Mucosa of descending colon (tissue), 3 donors: ENCODE measurements at regions of chr5 and their contacts with region 1.

Region 1: DNA sequence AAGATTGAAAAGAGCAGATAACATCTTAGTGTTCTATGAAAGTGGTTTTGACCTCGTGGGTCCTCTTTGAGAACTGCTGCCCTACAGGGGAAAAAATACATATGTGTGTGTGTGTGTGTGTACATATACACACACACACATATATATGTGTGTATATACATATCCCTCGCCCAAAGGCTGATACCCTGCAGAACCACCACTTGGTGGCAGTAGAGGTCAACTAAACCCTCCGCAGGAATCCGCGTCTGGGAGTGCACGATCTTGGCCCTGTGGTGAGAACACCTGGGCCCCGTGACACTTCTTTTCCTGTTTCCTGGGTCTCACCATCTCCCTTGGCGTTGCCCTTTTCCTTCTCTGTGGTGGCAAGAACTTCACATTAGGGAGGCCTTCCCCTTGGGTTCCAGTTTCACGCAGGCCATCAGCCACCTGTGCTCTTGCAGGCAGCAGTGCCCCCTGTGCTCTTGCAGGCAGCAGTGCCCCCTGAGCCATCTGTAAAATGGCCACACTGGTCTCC is 8.2 kb downstream of the IL9 start:
- DNase-seq: peak in 2 of 3 donors; percentile 67 to 76
- ATAC-seq: peak; percentile 98
- H3K4me3 ChIP-seq: no peak overlapping the region
- H3K4me1 ChIP-seq: no peaks in the 10 kb centered on the region
- CTCF ChIP-seq: peak; percentile 69

Region 2: DNA sequence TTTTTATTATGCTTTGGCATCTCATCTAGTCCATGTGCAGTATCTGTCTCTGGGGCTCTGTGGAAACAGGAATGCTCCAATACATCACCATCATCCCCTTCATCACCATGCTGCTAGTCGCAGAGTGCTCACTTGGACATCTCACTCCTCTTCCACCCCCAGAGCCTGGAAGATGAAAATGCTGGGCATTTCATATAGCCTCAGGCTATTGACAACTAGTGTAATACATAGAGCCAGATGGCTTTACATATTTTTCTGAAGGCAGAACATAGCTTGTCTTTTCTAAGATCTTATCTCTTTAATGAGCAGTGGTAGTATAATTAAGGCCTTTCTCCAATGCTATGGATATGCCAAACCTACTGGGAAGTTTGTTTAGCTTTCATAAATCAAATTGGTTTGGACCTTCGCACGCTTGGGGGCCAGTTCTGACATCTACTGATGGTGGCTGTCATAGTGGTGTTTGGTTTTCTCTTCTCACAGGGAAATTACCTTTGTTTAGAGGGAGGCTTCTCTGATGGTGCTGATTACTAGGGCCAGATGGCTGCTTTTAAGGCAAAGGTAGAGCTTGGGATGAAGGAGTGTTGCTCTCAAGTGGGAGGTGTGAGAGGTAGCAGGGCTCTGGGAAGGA is 245.6 kb before region 1 on chr5:
- intact Hi-C with region 1: no loop called
- DNase-seq: no peak
- ATAC-seq: no peak
- H3K4me3 ChIP-seq: no peak overlapping the region
- H3K4me1 ChIP-seq: no peaks in the 10 kb centered on the region
- CTCF ChIP-seq: no peak

Region 3: DNA sequence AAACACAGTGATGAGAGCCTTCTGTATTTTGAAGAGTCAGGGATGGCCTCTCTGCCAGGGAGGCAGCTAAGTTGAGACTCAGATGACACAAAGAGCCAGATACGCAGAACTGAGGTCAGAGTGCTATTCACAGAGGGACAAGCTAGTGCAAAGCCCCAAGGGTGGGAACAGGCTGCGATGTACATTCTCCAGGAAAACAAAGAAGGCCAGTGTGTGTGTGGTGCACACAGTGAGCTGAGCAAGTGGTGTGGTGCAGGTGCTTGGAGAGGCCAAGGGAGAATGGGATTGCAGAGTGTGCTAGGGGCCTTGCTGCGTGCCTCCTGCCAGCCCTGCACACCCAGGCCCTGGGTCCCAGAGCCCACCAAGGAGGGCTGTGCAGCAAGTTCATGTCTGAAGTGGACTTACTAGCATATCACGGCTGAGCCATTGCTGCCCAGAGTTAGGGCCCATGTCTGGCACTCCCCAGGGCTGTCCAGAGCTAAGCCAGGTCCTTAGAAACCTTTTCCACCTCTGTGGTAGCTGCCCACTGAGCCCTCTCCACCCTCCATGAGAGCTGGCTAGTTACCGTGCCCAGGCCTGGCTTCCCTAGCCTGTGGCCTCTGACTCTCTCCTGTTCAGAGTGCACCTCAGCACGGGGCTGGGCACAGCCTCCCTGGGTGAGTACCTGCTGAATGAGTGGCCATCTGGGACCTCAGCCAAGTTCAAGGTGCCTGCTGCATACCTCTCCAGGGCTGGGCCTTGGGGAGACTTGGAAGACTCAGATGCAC is 43.7 kb before region 1 on chr5:
- intact Hi-C with region 1: no loop called
- DNase-seq: peak; percentile 78 to 80 (median 79)
- ATAC-seq: peak; percentile 96
- H3K4me3 ChIP-seq: no peak overlapping the region
- H3K4me1 ChIP-seq: peaks cover 2% of the 10 kb centered on the region
- CTCF ChIP-seq: no peak

Region 4: GRCh38 chr5:136037001-136037705 is 149.7 kb after region 1 on chr5:
- intact Hi-C with region 1: no loop called
- DNase-seq: peak in 2 of 3 donors; percentile 45 to 48
- ATAC-seq: peak; percentile 85
- H3K4me3 ChIP-seq: no peak overlapping the region
- H3K4me1 ChIP-seq: peaks cover 27% of the 10 kb centered on the region
- CTCF ChIP-seq: no peak

Region 5: GRCh38 chr5:136062366-136063274 is 175.2 kb after region 1 on chr5:
- intact Hi-C with region 1: loop called (anchors 5 to 10 kb)
- DNase-seq: peak in 1 of 3 donors; percentile 48
- ATAC-seq: peak; percentile 61
- H3K4me3 ChIP-seq: no peak overlapping the region
- H3K4me1 ChIP-seq: no peaks in the 10 kb centered on the region
- CTCF ChIP-seq: no peak

Region 6: GRCh38 chr5:136212252-136212721 is 324.9 kb after region 1 on chr5:
- intact Hi-C with region 1: loop called (anchors 1 to 5 kb)
- DNase-seq: peak in 2 of 3 donors; percentile 77 to 82
- ATAC-seq: peak; percentile 77
- H3K4me3 ChIP-seq: no peak overlapping the region
- H3K4me1 ChIP-seq: no peaks in the 10 kb centered on the region
- CTCF ChIP-seq: peak; percentile 86